ENCODE measurements at regions of chr14 and their contacts with region 1.

Region 1: GRCh38 chr14:73633116-73634010 is 11.4 kb upstream of the DNAL1 start:
- DNase-seq: peak; percentile 67
- ATAC-seq: peak; percentile 61
- H3K4me3 Mint-ChIP-seq: peak overlapping the region; percentile 77
- H3K27ac Mint-ChIP-seq: peak overlapping the region; percentile 96
- H3K4me1 Mint-ChIP-seq: peaks cover 12% of the 10 kb centered on the region
- H3K27me3 Mint-ChIP-seq: peaks cover 2% of the 10 kb centered on the region; the same call in 1 of the 2 replicates
- CTCF ChIP-seq: peak; percentile 65

Region 2: GRCh38 chr14:73568381-73568781 is 65.0 kb before region 1 on chr14:
- CTCF ChIA-PET with region 1: interaction called, 38 read pairs
- POLR2A ChIA-PET with region 1: interaction called, 4 read pairs
- DNase-seq: no peak
- ATAC-seq: no peak
- H3K4me3 Mint-ChIP-seq: peak overlapping the region; percentile 78
- H3K27ac Mint-ChIP-seq: no peak overlapping the region
- H3K4me1 Mint-ChIP-seq: peaks cover 30% of the 10 kb centered on the region
- H3K27me3 Mint-ChIP-seq: peaks cover 13% of the 10 kb centered on the region
- CTCF ChIP-seq: no peak

Region 3: GRCh38 chr14:73613046-73613383 is 20.3 kb before region 1 on chr14:
- CTCF ChIA-PET with region 1: interaction called, 16 read pairs
- POLR2A ChIA-PET with region 1: interaction called, 4 read pairs
- DNase-seq: no peak
- ATAC-seq: peak; percentile 9
- H3K4me3 Mint-ChIP-seq: peak overlapping the region; percentile 88
- H3K27ac Mint-ChIP-seq: no peak overlapping the region
- H3K4me1 Mint-ChIP-seq: peaks cover 8% of the 10 kb centered on the region
- H3K27me3 Mint-ChIP-seq: peaks cover 47% of the 10 kb centered on the region
- CTCF ChIP-seq: no peak

Measured in WTC11 (cell line).